Heart left ventricle (tissue), 16 donors: ENCODE measurements at regions of chr6 and their contacts with region 1.

Region 1: GRCh38 chr6:32984605-32985389 is 16.4 kb downstream of the BRD2 start:
- DNase-seq: peak; percentile 84 to 93 (median 88)
- ATAC-seq: peak; percentile 75 to 86 (median 81)
- H3K4me3 ChIP-seq: no peak overlapping the region
- H3K27ac ChIP-seq: peak overlapping the region in 1 of 12 donors; percentile 9
- H3K4me1 ChIP-seq: peaks cover 0 to 18% (median 7%) of the 10 kb centered on the region in 12 donors
- H3K27me3 ChIP-seq: no peaks in the 10 kb centered on the region
- CTCF ChIP-seq: peak; percentile 72 to 98 (median 90)
- POLR2A ChIP-seq: no peak

Region 2: DNA sequence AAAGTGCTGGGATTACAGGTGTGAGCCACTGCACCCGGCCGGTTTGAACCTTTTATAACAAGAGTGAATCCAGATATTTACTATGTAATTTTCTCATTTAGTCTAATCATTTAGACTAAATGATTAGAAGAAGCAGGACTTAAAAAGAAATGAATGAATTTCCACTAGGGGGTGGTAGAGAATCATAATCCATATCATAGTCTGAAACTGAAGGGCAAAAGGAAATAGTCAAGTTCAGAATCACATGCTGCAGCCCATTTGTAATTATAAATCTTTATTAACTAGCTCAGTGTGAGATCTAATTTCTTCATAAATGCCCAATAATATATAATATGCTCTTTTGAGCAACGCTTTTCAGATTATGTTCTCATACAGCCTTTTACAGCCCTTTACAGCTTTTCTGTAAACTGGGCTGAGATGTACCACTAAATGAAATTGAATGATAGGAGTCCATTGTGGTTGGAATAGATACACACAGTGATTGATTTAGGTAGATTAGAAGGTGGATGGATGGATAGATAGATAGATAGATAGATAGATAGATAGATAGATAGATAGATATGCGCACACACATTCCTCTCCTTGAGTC is 99.0 kb before region 1 on chr6:
- intact Hi-C with region 1: loop called (anchors 1 to 2 kb)
- DNase-seq: no peak
- ATAC-seq: peak; percentile 44 to 63 (median 52)
- H3K4me3 ChIP-seq: no peak overlapping the region
- H3K27ac ChIP-seq: peak overlapping the region in 1 of 12 donors; percentile 60
- H3K4me1 ChIP-seq: peaks cover 0 to 23% (median 0%) of the 10 kb centered on the region in 12 donors
- H3K27me3 ChIP-seq: no peaks in the 10 kb centered on the region
- CTCF ChIP-seq: peak; percentile 53 to 79 (median 68)
- POLR2A ChIP-seq: no peak